Right ventricle myocardium inferior (tissue), 1 donor: ENCODE measurements at regions of chr11 and their contacts with region 1.

Region 1: DNA sequence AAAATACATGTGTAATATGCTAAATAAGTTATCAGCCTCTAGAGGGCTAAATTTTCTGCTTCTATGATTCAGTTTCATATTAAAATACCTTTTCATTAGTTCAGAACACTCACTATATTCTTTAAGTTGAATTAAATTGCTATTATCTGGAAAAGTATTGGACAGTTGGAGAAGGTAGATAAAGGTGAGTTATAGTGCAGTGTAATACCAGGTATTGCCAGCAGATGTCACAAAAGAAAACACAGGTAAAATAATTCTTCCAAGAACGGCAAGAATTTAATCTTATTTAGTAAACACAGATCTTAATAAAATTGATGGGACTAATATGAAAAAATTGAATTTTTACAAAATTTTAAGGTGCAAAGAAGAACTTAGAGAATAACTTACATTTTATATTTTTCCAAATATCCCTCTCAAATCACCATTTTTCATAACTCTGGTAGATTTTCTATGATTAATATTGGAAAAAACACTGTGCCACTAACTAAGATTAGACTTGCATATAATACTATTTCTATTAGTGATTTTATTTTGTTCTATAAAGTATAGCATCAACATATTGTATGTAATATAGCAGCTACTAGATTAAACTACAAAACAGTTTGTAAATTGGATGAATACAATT is 1.7 kb upstream of the LRRC4C start:
- DNase-seq: no peak
- ATAC-seq: no peak

Region 2: GRCh38 chr11:41309111-41309522 is 152.1 kb before region 1 on chr11:
- intact Hi-C with region 1: no loop called
- DNase-seq: no peak
- ATAC-seq: no peak

Region 3: DNA sequence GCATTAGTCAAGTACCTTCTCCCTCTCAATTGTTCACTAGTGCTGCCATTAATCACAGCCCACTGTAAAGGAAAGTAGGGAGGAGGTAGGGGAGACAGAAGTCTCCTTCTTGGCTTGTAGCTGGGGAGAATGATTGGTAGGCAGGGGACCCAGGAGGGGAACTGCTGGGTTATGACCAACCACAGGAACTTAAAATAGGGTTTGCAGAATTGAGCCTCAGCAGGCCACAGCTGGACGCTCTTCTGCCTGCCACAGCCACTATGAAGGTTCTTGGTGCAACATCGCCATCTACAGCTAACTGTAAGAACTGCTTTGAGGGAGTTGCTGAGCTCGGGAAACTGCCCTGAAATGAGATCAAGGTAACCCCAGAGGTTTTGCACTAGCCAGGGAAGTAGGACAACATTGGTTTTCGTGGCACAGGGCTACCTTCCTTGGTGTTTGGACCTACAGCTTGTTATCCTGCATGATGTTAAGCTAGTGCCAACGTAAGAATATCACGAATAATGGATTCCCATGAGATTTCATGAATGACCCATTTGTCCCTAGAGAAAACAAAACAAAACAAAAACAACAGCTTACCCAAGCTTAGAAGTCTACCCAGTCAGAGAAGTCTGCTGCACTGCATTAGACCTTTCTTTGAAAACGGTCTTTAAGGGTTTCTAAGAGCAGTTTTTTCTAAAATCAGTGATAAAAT is 1063.5 kb after region 1 on chr11:
- intact Hi-C with region 1: loop called (anchors 10 kb)
- DNase-seq: no peak
- ATAC-seq: peak; percentile 46

Region 4: DNA sequence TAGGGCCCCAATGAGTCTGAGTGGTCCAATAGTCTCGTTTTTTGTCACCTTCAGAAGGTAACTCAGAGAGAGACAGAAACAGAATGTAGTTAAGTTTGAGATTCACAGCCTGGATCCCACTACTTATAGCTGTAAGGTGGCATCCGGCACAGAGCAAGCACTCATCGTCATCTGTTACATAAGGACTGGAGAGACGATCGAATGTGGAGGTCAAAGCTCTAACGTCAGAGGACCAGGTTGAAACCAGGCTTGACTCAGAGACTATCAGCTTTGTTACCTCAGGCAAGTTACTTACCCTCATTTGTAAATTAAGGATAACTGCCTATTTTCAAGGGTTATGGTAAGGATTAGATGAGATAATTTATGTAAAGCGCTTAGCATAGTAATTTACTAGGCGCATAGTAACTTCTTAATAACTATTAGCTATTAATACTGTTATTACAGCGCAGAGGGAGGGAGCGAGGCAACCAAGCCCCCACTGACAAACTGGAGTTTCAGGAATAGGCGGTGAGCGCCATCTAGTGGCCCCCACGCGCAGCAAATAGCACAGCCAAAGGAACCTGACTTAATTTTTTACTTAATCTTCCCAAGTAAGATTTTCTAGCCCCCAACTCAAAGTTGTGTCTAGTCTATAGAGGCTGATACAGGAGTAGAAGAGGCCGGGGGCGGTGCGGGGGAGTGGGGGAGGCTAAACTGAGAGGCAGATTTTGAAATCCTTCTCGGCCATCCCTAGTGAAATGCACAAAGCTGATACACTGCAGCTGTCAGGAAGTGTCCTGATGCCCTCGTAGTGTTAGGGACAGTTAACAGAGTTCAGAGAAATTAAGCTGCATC is 1821.7 kb after region 1 on chr11:
- intact Hi-C with region 1: loop called (anchors 5 kb)
- DNase-seq: peak; percentile 67
- ATAC-seq: peak; percentile 26